ENCODE measurements at regions of chr12 and their contacts with region 1.

Region 1: DNA sequence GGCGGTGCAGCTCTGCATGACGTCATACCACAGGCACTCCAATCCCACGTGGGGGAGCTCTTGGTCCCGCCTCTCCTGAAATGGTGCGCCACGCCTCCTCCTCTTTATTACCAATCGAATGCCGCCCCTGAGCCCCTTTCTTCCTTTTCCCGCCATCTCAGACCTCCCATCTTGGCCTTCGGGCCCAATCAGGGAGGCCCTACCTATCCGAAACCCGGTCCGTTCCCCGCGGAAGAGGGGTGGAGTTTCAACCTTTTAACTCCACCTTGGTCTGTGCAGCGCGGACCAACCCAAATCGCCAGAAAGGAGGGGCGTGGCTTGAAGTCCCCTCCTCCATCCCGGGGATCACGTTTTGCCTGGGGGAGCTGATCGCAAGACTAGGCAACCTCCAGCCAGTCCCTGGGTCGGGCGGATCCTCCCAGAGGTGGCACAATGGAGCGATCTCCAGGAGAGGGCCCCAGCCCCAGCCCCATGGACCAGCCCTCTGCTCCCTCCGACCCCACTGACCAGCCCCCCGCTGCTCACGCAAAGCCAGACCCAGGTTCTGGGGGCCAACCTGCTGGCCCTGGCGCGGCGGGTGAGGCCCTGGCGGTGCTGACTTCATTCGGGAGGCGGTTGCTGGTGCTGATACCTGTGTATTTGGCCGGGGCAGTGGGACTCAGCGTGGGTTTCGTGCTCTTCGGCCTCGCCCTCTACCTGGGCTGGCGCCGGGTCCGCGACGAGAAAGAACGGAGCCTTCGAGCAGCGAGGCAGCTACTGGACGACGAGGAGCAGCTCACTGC is at the start of gene ESYT1:
- DNase-seq: peak; percentile 99
- ATAC-seq: peak; percentile 95
- H3K4me3 Mint-ChIP-seq: peak within 1 kb of the TSS; percentile 98
- H3K27ac Mint-ChIP-seq: peak within 1 kb of the TSS; percentile 99
- H3K4me1 Mint-ChIP-seq: peaks cover 30% of the 10 kb centered on the region
- H3K27me3 Mint-ChIP-seq: no peaks in the 10 kb centered on the region; the same call in 1 of the 2 replicates
- CTCF ChIP-seq: no peak
- total RNA-seq, gene ESYT1: 77.7 to 80.8 TPM (median 80.1 TPM) in 3 replicates

Region 2: DNA sequence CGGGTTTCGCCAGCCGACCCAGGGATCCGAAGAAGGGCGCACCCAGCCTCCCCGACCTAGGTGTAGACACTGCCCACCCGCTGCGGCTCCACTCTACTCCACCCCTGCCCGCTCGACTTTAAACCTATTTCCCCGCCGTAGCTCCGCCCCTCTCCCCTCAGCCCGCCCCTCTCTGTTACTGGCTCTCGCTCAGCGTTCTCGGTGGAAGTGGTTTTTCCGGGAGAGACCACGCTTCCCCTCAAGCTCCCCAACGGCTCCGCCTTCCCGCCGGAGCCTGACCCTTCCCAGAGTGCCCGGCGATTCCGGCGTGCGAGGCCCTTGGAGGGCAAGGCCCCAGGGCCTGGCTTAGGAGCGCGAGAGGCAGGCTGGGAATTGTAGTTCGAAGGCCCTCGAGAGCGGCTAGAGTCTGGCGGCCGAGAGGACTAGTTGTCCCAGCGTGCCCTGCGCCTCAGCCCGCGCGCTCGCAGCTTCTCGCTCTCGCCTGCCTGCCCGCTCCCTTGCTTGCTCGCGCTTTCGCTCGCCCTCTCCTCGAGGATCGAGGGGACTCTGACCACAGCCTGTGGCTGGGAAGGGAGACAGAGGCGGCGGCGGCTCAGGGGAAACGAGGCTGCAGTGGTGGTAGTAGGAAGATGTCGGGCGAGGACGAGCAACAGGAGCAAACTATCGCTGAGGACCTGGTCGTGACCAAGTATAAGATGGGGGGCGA is 23.8 kb before region 1 on chr12 and contains the start of gene PA2G4:
- CTCF ChIA-PET with region 1: interaction called, 19 read pairs
- POLR2A ChIA-PET with region 1: interaction called, 9 read pairs
- DNase-seq: peak; percentile 98
- ATAC-seq: peak; percentile 98
- H3K4me3 Mint-ChIP-seq: peak within 1 kb of the TSS; percentile 90
- H3K27ac Mint-ChIP-seq: peak within 1 kb of the TSS; percentile 99
- H3K4me1 Mint-ChIP-seq: peaks cover 24% of the 10 kb centered on the region
- H3K27me3 Mint-ChIP-seq: no peaks in the 10 kb centered on the region
- CTCF ChIP-seq: no peak
- total RNA-seq, gene PA2G4: 198 to 249 TPM (median 199 TPM) in 3 replicates

Region 3: DNA sequence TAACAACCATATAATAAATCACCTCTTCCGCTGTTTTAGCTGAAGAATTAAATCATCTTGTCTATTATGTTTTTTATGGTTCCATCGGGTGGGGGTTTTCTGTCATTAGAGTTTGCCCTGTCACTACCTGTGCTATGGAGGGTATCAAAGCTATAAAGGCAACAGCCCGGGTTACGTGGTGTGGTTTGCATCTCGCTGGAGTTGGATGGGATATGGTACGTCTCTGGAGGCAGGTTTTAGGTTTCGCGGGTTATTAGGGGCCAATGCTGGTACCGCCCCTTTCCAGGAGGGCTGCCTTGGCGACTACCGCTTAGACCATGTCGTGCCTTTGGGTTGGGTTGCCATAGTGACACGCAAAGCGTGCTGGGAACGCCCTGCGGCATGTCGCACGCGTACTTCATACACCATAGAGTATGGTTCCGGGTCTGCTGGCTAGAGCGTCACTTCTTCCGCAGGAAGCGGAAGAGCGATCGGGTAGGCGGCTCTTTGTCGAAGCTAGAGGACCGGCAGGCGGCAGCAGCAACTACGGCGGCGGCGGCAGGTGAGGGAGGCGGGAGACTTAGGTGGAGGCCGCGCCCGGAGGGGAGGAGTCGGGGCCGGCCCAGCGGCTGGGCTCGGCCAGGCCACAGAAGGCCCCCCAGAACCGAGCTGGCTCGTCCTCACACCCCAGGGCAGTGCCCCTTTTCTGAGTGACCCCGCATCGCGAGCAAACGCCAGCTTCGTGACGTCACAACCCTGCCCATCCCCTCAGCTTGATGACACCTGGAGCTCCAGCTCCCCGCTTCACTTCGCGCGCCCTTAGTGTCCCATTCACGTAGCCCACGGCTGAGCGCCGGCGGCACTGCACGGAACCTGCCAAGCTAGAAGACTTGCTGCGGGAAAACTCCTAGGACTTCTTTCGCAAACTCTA is 10.0 kb before region 1 on chr12 and contains the start of gene ZC3H10:
- CTCF ChIA-PET with region 1: interaction called, 55 read pairs
- POLR2A ChIA-PET with region 1: interaction called, 71 read pairs
- DNase-seq: peak; percentile 98
- ATAC-seq: peak; percentile 75
- H3K4me3 Mint-ChIP-seq: peak within 1 kb of the TSS; percentile 100
- H3K27ac Mint-ChIP-seq: peak within 1 kb of the TSS; percentile 100
- H3K4me1 Mint-ChIP-seq: peaks cover 21% of the 10 kb centered on the region
- H3K27me3 Mint-ChIP-seq: no peaks in the 10 kb centered on the region
- CTCF ChIP-seq: no peak
- total RNA-seq, gene ZC3H10: 11.3 to 13.6 TPM (median 13.1 TPM) in 3 replicates

Region 4: GRCh38 chr12:56152318-56153033 is 24.4 kb after region 1 on chr12 and contains the start of gene MYL6B:
- CTCF ChIA-PET with region 1: interaction called, 22 read pairs
- POLR2A ChIA-PET with region 1: interaction called, 12 read pairs
- DNase-seq: peak; percentile 91
- ATAC-seq: peak; percentile 79
- H3K4me3 Mint-ChIP-seq: peak within 1 kb of the TSS; percentile 93
- H3K27ac Mint-ChIP-seq: peak within 1 kb of the TSS; percentile 88
- H3K4me1 Mint-ChIP-seq: peaks cover 18% of the 10 kb centered on the region
- H3K27me3 Mint-ChIP-seq: no peaks in the 10 kb centered on the region
- CTCF ChIP-seq: no peak
- total RNA-seq, gene MYL6B: 171 to 180 TPM (median 173 TPM) in 3 replicates

Region 5: GRCh38 chr12:56158029-56158925 is 30.2 kb after region 1 on chr12 and contains the start of gene MYL6:
- CTCF ChIA-PET with region 1: interaction called, 13 read pairs
- POLR2A ChIA-PET with region 1: interaction called, 104 read pairs
- DNase-seq: peak; percentile 93
- ATAC-seq: peak; percentile 65
- H3K4me3 Mint-ChIP-seq: peak within 1 kb of the TSS; percentile 96
- H3K27ac Mint-ChIP-seq: peak within 1 kb of the TSS; percentile 99
- H3K4me1 Mint-ChIP-seq: peaks cover 49% of the 10 kb centered on the region
- H3K27me3 Mint-ChIP-seq: no peaks in the 10 kb centered on the region
- CTCF ChIP-seq: no peak; the same call in 1 of the 2 replicates
- total RNA-seq, gene MYL6: 835 to 932 TPM (median 844 TPM) in 3 replicates

Region 6: GRCh38 chr12:56165369-56165768 is 37.3 kb after region 1 on chr12:
- CTCF ChIA-PET with region 1: interaction called, 13 read pairs
- POLR2A ChIA-PET with region 1: interaction called, 104 read pairs
- DNase-seq: no peak
- ATAC-seq: no peak
- H3K4me3 Mint-ChIP-seq: no peak overlapping the region
- H3K27ac Mint-ChIP-seq: no peak overlapping the region
- H3K4me1 Mint-ChIP-seq: peaks cover 27% of the 10 kb centered on the region
- H3K27me3 Mint-ChIP-seq: no peaks in the 10 kb centered on the region
- CTCF ChIP-seq: no peak

Region 7: DNA sequence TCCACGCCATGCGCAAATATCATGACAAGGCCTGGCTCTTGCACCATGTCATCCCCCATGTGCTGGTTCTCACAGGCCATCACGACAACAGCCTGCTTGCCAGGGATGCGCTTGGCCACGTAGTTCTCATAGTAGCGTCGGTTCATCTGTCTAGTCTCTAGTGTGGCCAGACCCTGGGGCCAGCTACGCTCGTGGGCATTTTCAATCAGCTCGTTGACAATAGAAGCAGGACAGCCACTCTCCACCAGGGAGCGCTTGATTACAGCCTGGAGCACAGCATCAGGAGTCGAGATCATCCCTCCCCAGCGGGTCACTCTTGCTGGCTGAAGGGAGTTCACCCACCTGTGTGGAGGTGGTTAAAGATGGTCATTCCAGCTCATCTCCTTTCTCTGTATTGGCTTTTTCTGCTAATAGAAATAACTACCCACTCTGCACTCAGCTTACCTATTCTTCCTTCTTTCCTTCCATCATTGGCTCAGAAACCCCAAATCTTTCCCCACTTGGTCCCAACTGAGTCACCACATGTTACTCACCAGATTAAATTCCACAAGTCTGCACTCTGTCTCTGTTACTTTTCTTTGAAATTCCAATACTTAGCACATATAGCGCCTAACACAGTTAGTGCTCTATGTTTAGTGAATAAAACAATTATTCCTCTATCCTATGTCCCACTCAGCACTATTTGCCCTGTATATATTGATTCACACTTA is 78.5 kb after region 1 on chr12:
- CTCF ChIA-PET with region 1: interaction called, 13 read pairs
- POLR2A ChIA-PET with region 1: no interaction called
- DNase-seq: peak; percentile 83
- ATAC-seq: peak; percentile 96
- H3K4me3 Mint-ChIP-seq: no peak overlapping the region
- H3K27ac Mint-ChIP-seq: peak overlapping the region; percentile 90
- H3K4me1 Mint-ChIP-seq: no peaks in the 10 kb centered on the region
- H3K27me3 Mint-ChIP-seq: no peaks in the 10 kb centered on the region
- CTCF ChIP-seq: no peak; the same call in 1 of the 2 replicates

Region 8: DNA sequence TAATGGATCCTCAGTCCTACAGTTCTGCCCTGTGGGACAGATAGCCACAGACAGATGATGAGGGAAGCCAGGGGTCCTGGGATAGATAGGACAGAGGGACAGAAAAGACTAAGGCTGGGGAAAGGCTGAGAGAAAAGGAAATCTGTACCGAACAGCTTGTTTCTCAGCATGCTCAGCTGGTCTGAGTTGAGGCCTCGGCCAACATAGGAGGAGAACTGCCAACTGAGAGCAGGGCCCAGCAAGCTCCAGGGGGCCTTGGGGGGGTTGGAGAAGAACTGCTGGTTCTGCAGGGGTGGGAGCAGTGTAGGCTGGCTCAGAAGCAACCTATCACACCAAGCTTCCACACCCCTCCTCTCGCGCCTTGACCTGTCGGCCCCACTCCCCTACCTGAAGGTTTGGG is 220.7 kb after region 1 on chr12:
- CTCF ChIA-PET with region 1: no interaction called
- POLR2A ChIA-PET with region 1: no interaction called
- DNase-seq: no peak
- ATAC-seq: no peak
- H3K4me3 Mint-ChIP-seq: no peak overlapping the region
- H3K27ac Mint-ChIP-seq: no peak overlapping the region
- H3K4me1 Mint-ChIP-seq: no peaks in the 10 kb centered on the region
- H3K27me3 Mint-ChIP-seq: no peaks in the 10 kb centered on the region; the same call in 1 of the 2 replicates
- CTCF ChIP-seq: no peak

Region 9: GRCh38 chr12:56488041-56488955 is 360.2 kb after region 1 on chr12 and contains the start of gene GLS2:
- CTCF ChIA-PET with region 1: no interaction called
- POLR2A ChIA-PET with region 1: no interaction called
- DNase-seq: peak; percentile 85
- ATAC-seq: peak; percentile 90
- H3K4me3 Mint-ChIP-seq: peak within 1 kb of the TSS; percentile 94
- H3K27ac Mint-ChIP-seq: no peak within 1 kb of the TSS
- H3K4me1 Mint-ChIP-seq: peaks cover 16% of the 10 kb centered on the region
- H3K27me3 Mint-ChIP-seq: peaks cover 69% of the 10 kb centered on the region
- CTCF ChIP-seq: no peak
- total RNA-seq, gene GLS2: 14.8 to 17.2 TPM (median 15.9 TPM) in 3 replicates

Region 10: GRCh38 chr12:56571126-56571525 is 443.0 kb after region 1 on chr12:
- CTCF ChIA-PET with region 1: no interaction called
- POLR2A ChIA-PET with region 1: no interaction called
- DNase-seq: no peak
- ATAC-seq: peak; percentile 38; the same call in 1 of the 2 replicates
- H3K4me3 Mint-ChIP-seq: no peak overlapping the region
- H3K27ac Mint-ChIP-seq: no peak overlapping the region
- H3K4me1 Mint-ChIP-seq: peaks cover 2% of the 10 kb centered on the region; the same call in 1 of the 2 replicates
- H3K27me3 Mint-ChIP-seq: no peaks in the 10 kb centered on the region
- CTCF ChIP-seq: no peak

Measured in WTC11 (cell line).